CD4-positive, alpha-beta T cell (primary cell): ENCODE measurements at regions of chr6 and their contacts with region 1.

Region 1: DNA sequence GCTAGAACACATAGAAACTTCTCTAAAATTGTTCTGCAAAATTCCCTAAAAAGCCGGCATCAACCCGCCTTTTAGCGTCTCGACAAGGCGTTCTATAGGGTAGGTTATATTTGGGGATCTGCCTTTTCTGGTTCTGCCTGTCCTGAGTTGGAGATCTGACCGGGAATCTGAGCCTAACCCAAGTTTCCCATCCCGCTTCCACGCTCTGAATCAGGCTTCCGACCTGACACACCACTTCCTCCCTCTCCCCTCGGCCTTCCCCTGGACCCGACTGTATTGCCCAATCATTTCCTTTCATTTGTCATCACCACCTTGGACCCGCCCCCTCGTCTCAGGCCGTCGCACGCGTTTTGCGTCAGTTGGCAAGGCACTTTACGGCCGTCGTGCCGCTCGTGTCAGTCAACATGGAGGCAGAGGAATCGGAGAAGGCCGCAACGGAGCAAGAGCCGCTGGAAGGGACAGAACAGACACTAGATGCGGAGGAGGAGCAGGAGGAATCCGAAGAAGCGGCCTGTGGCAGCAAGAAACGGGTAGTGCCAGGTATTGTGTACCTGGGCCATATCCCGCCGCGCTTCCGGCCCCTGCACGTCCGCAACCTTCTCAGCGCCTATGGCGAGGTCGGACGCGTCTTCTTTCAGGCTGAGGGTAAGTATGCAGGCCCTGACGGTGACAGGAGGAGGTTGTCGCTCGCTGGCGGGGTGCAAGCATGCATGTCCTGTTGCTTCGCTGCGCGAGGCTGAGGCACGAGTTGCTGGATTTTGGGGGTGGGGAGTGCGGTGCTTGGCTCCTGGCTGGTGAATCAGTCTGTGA is at the start of gene ABT1:
- DNase-seq: peak; percentile 92 to 98 (median 96)
- ATAC-seq: peak; percentile 79
- H3K4me3 ChIP-seq: peak within 1 kb of the TSS; percentile 98
- H3K4me3 Mint-ChIP-seq: no peak within 1 kb of the TSS
- H3K27ac ChIP-seq: peak within 1 kb of the TSS; percentile 86 to 95
- H3K27ac Mint-ChIP-seq: no peak within 1 kb of the TSS
- H3K4me1 ChIP-seq: peaks cover 31% of the 10 kb centered on the region
- H3K4me1 Mint-ChIP-seq: peaks cover 23% of the 10 kb centered on the region
- H3K27me3 ChIP-seq: peaks cover 8 to 28% of the 10 kb centered on the region in 2 experiments
- H3K27me3 Mint-ChIP-seq: peaks cover 30% of the 10 kb centered on the region
- CTCF ChIP-seq: no peak
- total RNA-seq, gene ABT1: 39.8 to 40.4 TPM

Region 2: GRCh38 chr6:26322645-26323482 is 273.9 kb before region 1 on chr6:
- CTCF ChIA-PET with region 1: interaction called, 12 read pairs
- POLR2A ChIA-PET with region 1: no interaction called
- intact Hi-C with region 1: no loop called
- DNase-seq: peak in 10 of 14 experiments; percentile 20 to 88 (median 52)
- ATAC-seq: peak; percentile 75
- H3K4me3 ChIP-seq: peak overlapping the region; percentile 54
- H3K4me3 Mint-ChIP-seq: peak overlapping the region; percentile 96
- H3K27ac ChIP-seq: no peak overlapping the region
- H3K27ac Mint-ChIP-seq: peak overlapping the region; percentile 93
- H3K4me1 ChIP-seq: peaks cover 23% of the 10 kb centered on the region
- H3K4me1 Mint-ChIP-seq: peaks cover 30% of the 10 kb centered on the region
- H3K27me3 ChIP-seq: no peaks in the 10 kb centered on the region
- H3K27me3 Mint-ChIP-seq: peaks cover 35% of the 10 kb centered on the region
- CTCF ChIP-seq: no peak

Region 3: GRCh38 chr6:26454631-26455030 is 142.2 kb before region 1 on chr6:
- CTCF ChIA-PET with region 1: no interaction called
- POLR2A ChIA-PET with region 1: no interaction called
- intact Hi-C with region 1: no loop called
- DNase-seq: no peak
- ATAC-seq: no peak
- H3K4me3 ChIP-seq: no peak overlapping the region
- H3K4me3 Mint-ChIP-seq: no peak overlapping the region
- H3K27ac ChIP-seq: no peak overlapping the region
- H3K27ac Mint-ChIP-seq: no peak overlapping the region
- H3K4me1 ChIP-seq: peaks cover 16% of the 10 kb centered on the region
- H3K4me1 Mint-ChIP-seq: peaks cover 33% of the 10 kb centered on the region
- H3K27me3 ChIP-seq: no peaks in the 10 kb centered on the region
- H3K27me3 Mint-ChIP-seq: no peaks in the 10 kb centered on the region
- CTCF ChIP-seq: no peak

Region 4: DNA sequence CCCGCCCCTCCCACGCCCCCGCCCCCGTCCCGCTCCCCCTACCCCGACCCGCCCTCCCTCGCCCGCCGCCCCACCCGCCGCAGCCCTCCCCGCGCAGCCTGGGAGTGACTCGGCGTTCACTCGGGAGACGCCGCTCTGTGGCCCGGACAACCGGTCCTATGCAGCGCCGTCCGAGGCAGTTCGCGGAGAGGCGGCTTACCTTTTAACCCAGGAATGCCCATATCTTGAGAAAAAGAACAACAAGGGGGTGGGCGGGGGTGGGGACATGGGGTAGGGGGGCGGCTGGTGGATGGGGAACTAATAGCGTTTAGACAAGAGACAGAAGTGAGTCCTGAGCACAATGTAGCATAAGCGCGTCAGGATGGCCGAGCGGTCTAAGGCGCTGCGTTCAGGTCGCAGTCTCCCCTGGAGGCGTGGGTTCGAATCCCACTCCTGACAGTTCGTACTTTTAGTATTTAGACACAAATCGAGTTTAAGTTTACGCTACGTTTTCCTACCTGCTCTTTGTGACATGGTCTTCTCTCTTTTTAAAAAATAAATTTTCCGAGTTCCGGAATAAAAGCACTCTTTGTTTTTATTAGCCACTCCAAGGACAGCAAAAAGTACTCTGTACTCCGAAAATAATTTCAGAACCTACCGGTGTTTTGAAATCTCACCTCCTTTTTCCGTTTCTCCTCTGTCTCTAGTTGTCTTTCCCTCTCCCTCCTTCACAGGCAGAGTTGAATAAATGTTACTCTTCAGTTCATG is 75.8 kb before region 1 on chr6:
- CTCF ChIA-PET with region 1: interaction called, 12 read pairs
- POLR2A ChIA-PET with region 1: no interaction called
- intact Hi-C with region 1: no loop called
- DNase-seq: peak; percentile 77 to 93 (median 84)
- ATAC-seq: peak; percentile 81
- H3K4me3 ChIP-seq: peak overlapping the region; percentile 65
- H3K4me3 Mint-ChIP-seq: peak overlapping the region; percentile 89
- H3K27ac ChIP-seq: peak overlapping the region; percentile 50 to 61
- H3K27ac Mint-ChIP-seq: peak overlapping the region; percentile 99
- H3K4me1 ChIP-seq: peaks cover 10% of the 10 kb centered on the region
- H3K4me1 Mint-ChIP-seq: peaks cover 30% of the 10 kb centered on the region
- H3K27me3 ChIP-seq: no peaks in the 10 kb centered on the region
- H3K27me3 Mint-ChIP-seq: peaks cover 9% of the 10 kb centered on the region
- CTCF ChIP-seq: no peak

Region 5: DNA sequence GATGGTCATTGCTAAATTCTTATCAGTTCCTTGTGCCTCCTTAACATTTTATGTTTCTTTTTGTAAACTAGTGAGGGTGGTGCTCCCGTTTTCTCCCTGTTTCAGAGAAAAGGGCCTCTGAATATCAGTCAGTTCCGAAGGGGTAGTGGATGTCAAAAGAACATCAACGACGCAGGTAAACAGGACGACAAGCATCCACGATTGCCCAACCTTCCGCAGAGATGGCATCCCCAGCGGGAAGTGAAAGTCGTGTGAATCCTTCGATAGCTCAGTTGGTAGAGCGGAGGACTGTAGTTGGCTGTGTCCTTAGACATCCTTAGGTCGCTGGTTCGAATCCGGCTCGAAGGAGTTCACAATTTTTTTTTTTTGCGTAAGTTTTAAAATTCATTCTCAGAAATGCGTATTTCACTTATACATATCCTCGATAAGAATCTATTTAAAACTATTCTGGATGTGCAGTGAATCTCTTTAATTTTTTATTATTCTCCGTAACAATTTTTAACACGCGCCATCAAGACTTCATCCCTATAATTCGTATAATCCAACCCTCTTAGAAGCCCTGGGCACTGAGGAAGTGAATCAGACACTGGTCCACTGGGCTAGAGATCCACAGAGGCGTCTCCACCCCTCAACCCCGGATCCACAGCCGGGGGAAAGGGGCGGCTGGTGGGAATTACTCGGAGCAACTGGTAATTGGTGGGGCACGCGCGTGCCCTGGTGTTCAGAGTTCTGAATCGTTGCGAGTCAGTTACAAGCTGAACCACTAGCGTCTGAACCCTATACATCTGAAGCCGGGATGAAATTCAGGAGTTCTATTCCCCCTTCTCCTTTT is 28.0 kb before region 1 on chr6:
- CTCF ChIA-PET with region 1: interaction called, 31 read pairs
- POLR2A ChIA-PET with region 1: interaction called, 17 read pairs
- intact Hi-C with region 1: loop called in 1 of 2 experiments (anchors 1 kb)
- DNase-seq: peak; percentile 96 to 100 (median 98)
- ATAC-seq: peak; percentile 74
- H3K4me3 ChIP-seq: peak overlapping the region; percentile 55
- H3K4me3 Mint-ChIP-seq: peak overlapping the region; percentile 97
- H3K27ac ChIP-seq: peak overlapping the region; percentile 37 to 53
- H3K27ac Mint-ChIP-seq: peak overlapping the region; percentile 100
- H3K4me1 ChIP-seq: peaks cover 21% of the 10 kb centered on the region
- H3K4me1 Mint-ChIP-seq: peaks cover 29% of the 10 kb centered on the region
- H3K27me3 ChIP-seq: no peaks in the 10 kb centered on the region
- H3K27me3 Mint-ChIP-seq: peaks cover 16% of the 10 kb centered on the region
- CTCF ChIP-seq: peak; percentile 58

Region 6: DNA sequence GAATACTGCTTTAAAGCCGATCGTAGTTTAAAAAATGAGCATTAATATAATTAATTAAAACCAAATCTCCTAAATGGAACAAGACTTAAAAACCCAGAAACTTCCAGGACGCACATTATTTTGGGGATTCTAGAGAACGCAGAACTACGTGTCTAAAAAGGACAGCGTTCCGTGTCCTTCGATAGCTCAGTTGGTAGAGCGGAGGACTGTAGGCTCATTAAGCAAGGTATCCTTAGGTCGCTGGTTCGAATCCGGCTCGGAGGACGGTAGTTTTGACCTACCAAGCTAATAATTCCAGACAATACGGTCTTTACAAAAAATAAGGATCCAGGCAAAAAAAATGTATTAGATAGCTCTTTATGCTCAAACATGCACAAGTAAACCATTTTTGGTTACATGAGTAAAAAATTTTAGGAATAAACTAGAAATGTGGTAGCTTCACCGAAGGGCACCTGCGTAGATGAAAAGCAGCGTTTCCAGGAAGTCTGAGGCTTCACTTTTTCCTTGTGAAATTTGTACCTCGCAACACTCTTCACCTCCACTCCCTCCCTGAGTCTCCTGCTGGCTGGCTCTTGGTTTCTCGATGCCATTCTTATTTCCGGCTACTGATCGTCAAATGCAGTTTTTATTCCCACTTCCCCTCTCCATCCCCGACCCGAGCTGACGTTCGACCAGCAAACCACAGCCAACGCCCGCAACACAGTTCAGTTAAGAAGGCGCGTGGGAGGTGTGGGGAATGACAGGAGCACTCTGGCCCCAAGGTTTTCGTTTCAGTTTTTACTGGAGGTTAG is 19.7 kb before region 1 on chr6:
- CTCF ChIA-PET with region 1: interaction called, 50 read pairs
- POLR2A ChIA-PET with region 1: interaction called, 12 read pairs
- intact Hi-C with region 1: loop called (anchors 1 kb)
- DNase-seq: peak in 12 of 14 experiments; percentile 28 to 83 (median 46)
- ATAC-seq: peak; percentile 44
- H3K4me3 ChIP-seq: peak overlapping the region; percentile 56
- H3K4me3 Mint-ChIP-seq: peak overlapping the region; percentile 86
- H3K27ac ChIP-seq: no peak overlapping the region
- H3K27ac Mint-ChIP-seq: peak overlapping the region; percentile 92
- H3K4me1 ChIP-seq: peaks cover 16% of the 10 kb centered on the region
- H3K4me1 Mint-ChIP-seq: peaks cover 16% of the 10 kb centered on the region
- H3K27me3 ChIP-seq: no peaks in the 10 kb centered on the region
- H3K27me3 Mint-ChIP-seq: peaks cover 7% of the 10 kb centered on the region
- CTCF ChIP-seq: no peak